ENCODE measurements at regions of chr19 and their contacts with region 1.

Region 1: DNA sequence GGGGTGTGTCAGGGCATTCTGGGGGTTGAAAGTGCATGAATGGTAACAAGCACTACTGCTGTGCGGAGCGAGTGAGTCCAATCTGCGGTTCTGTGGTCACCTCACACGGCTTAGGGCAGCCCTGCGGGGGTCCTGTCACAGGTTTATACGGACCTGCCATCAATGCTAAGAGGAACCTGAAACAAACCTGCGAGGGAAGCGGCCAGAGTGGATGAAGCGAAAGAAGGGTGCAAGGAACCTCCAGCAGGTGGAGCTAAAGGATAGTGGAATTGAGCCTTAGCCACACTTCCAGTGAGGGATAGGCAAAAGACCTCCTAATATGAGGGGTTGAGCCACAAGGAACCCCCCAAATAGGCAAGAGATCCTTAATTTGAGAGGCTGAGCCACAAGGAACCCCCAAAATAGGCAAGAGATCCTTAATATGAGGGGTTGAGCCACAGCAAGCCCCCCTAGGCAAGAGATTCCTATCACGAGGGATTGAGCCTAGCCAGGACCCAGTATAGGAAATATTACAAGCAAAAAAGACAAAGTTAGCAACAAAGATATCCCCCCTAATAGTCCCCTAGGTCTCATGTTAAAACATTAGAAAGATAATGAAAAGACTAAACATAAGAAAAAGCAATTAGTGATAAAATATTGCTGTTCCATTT is 6.3 kb upstream of the ZNF69 start:
- DNase-seq: peak; percentile 52 to 67 (median 59)
- H3K4me3 ChIP-seq: no peak overlapping the region
- H3K4me3 Mint-ChIP-seq: peak overlapping the region in 1 of 8 donors; percentile 24
- H3K27ac ChIP-seq: no peak overlapping the region
- H3K27ac Mint-ChIP-seq: no peak overlapping the region
- H3K4me1 ChIP-seq: peaks cover 3% of the 10 kb centered on the region
- H3K4me1 Mint-ChIP-seq: peaks cover 0 to 2% (median under 1%) of the 10 kb centered on the region in 4 donors
- H3K27me3 ChIP-seq: no peaks in the 10 kb centered on the region
- H3K27me3 Mint-ChIP-seq: peaks cover 0 to 1% of the 10 kb centered on the region in 2 donors

Region 2: DNA sequence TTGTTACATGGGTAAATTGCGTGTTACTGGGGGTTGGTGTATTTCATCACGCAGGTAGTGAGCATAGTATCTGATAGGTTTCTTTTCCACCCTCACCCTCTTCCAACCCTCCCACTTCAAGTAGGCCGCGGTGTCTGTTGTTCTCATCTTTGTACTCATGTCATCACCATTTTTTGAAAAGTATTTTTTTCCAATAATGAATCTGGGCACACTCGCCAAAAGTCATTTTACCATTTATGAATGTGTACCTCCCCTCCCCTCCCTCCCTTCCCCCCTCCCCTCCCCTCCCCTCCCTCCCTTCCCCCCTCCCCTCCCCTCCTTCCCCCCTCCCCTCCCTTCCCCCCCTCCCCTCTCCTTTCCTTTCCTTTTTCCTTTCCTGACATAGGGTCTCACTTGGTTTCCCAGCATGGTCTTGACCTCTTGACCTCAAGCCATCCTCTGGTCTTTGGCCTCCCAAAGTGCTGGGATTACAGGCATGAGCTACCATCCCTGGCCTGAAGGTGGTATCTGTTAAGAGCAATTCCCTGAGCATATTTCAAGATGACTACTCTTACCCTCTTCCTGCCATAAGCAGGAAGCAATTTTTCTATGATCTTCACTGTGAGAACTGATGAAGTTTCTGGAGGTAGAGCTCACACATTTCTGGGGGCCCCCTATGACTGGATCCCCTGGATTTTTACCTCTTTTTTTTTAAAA is 268.3 kb before region 1 on chr19:
- CTCF ChIA-PET with region 1: no interaction called
- POLR2A ChIA-PET with region 1: no interaction called
- intact Hi-C with region 1: no loop called
- DNase-seq: no peak
- H3K4me3 ChIP-seq: no peak overlapping the region
- H3K4me3 Mint-ChIP-seq: no peak overlapping the region
- H3K27ac ChIP-seq: no peak overlapping the region
- H3K27ac Mint-ChIP-seq: peak overlapping the region in 1 of 7 donors; percentile 38
- H3K4me1 ChIP-seq: no peaks in the 10 kb centered on the region
- H3K4me1 Mint-ChIP-seq: peaks cover 0 to 8% (median 5%) of the 10 kb centered on the region in 4 donors
- H3K27me3 ChIP-seq: no peaks in the 10 kb centered on the region
- H3K27me3 Mint-ChIP-seq: no peaks in the 10 kb centered on the region

Region 3: DNA sequence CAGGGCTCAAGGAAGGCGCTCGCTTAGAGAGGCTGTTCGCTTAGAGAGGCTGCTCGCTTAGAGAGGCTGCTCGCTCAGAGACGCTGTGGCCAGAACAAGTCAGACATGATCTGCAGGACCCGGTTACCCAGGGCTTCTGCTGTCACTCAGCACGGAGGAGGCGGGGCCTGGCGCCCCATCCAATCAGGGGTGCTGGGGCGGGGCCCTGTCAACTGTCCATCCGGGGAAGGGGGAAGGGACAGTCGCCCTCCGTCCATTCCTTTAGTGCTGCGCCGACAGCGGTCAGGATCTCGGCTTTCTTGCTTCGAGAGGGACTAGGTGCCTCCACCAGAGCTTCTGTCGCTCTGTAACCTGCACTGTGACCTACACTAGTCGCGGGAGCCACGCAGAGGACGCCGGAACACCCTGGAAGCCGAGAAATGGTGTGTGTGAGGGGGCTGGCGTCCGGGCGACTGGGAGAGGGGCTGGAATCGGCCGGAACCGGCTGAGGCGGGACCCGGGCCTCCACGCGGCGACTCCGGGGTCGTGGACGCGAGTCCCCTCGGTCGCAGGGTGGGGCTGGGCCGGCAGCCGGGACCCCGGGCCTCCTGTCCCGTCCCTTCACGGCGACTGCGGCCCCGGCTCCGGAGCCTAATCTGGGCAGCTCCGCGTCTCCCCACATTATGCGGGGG is 67.1 kb before region 1 on chr19 and contains the start of gene ZNF440:
- CTCF ChIA-PET with region 1: interaction called, 4 read pairs
- POLR2A ChIA-PET with region 1: no interaction called
- intact Hi-C with region 1: loop called (anchors 1 kb)
- DNase-seq: peak; percentile 74 to 82 (median 74)
- H3K4me3 ChIP-seq: peak within 1 kb of the TSS; percentile 64 to 89
- H3K4me3 Mint-ChIP-seq: peak within 1 kb of the TSS; percentile 93 to 96 (median 95)
- H3K27ac ChIP-seq: peak within 1 kb of the TSS; percentile 56
- H3K27ac Mint-ChIP-seq: peak within 1 kb of the TSS; percentile 55 to 91 (median 86)
- H3K4me1 ChIP-seq: peaks cover 17% of the 10 kb centered on the region
- H3K4me1 Mint-ChIP-seq: peaks cover 13 to 29% (median 21%) of the 10 kb centered on the region in 4 donors
- H3K27me3 ChIP-seq: no peaks in the 10 kb centered on the region
- H3K27me3 Mint-ChIP-seq: no peaks in the 10 kb centered on the region
- total RNA-seq, gene ZNF440: 18.0 to 18.5 TPM

Region 4: GRCh38 chr19:11964858-11965645 is 83.8 kb after region 1 on chr19 and contains the start of gene ZNF763:
- CTCF ChIA-PET with region 1: interaction called, 4 read pairs
- POLR2A ChIA-PET with region 1: no interaction called
- intact Hi-C with region 1: loop called (anchors 1 kb)
- DNase-seq: peak; percentile 83 to 93 (median 85)
- H3K4me3 ChIP-seq: peak within 1 kb of the TSS; percentile 79 to 86
- H3K4me3 Mint-ChIP-seq: peak within 1 kb of the TSS; percentile 93 to 98 (median 96)
- H3K27ac ChIP-seq: peak within 1 kb of the TSS; percentile 91
- H3K27ac Mint-ChIP-seq: peak within 1 kb of the TSS; percentile 92 to 97 (median 96)
- H3K4me1 ChIP-seq: peaks cover 21% of the 10 kb centered on the region
- H3K4me1 Mint-ChIP-seq: peaks cover 16 to 32% (median 26%) of the 10 kb centered on the region in 4 donors
- H3K27me3 ChIP-seq: no peaks in the 10 kb centered on the region
- H3K27me3 Mint-ChIP-seq: no peaks in the 10 kb centered on the region
- total RNA-seq, gene ZNF763: 14.3 to 16.4 TPM